Naive thymus-derived CD4-positive, alpha-beta T cell (primary cell): ENCODE measurements at regions of chr15 and their contacts with region 1.

Region 1: DNA sequence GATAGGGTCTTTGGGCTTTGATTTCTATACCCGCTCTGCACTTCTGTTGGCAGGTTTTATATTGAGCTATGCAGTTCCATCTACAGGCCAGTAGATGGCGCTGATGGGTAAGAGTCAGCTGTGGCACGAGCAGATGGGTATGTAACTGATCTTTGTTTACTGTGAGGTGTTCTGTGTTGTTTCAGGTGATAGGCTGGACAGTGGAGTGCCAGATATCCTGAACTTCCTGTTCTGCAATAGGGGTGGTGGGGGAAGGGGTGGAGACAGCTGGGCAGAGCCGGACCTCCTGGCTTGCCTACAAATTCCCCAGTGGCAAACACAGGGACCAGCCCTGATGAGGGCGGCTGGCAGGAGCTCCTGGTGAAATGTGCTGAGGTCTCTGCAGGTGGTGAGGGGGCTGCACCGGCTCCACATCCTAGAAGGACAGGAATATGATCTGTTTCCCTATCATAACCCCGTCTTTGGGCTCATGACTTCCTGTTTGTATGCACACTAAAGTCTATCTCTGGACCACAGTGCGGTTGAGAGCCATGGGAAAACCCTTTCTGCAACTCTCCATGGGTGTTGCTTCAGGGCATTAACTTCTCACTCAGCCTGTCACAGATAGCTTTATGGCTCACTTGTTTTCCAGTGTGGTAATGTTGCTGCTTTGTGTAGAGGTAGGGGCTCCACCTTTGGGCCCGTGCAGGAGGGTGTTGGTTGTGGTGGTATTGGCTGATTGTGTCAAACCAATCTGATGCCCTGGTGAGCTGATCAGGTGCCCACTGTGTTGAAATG is 13.4 kb upstream of the FAM98B start:
- DNase-seq: peak in 8 of 9 donors; percentile 33 to 72 (median 54)
- ATAC-seq: peak; percentile 99
- H3K4me3 ChIP-seq: no peak overlapping the region
- H3K4me3 Mint-ChIP-seq: peak overlapping the region in 1 of 10 donors; percentile 11
- H3K27ac ChIP-seq: no peak overlapping the region
- H3K27ac Mint-ChIP-seq: peak overlapping the region in 5 of 9 donors; percentile 5 to 21 (median 16)
- H3K4me1 ChIP-seq: no peaks in the 10 kb centered on the region
- H3K4me1 Mint-ChIP-seq: peaks cover 0 to 15% (median 6%) of the 10 kb centered on the region in 7 donors
- H3K27me3 ChIP-seq: no peaks in the 10 kb centered on the region
- H3K27me3 Mint-ChIP-seq: peaks cover 18 to 53% (median 33%) of the 10 kb centered on the region in 5 donors

Region 2: GRCh38 chr15:38453971-38454695 is 13.6 kb after region 1 on chr15 and contains the start of gene FAM98B:
- CTCF ChIA-PET with region 1: interaction called, 31 read pairs
- POLR2A ChIA-PET with region 1: interaction called, 4 read pairs
- intact Hi-C with region 1: no loop called
- DNase-seq: peak; percentile 73 to 94 (median 82)
- ATAC-seq: peak; percentile 92
- H3K4me3 ChIP-seq: peak within 1 kb of the TSS; percentile 98
- H3K4me3 Mint-ChIP-seq: peak within 1 kb of the TSS; percentile 86 to 99 (median 96)
- H3K27ac ChIP-seq: peak within 1 kb of the TSS; percentile 95
- H3K27ac Mint-ChIP-seq: peak within 1 kb of the TSS; percentile 92 to 99 (median 95)
- H3K4me1 ChIP-seq: peaks cover 13 to 22% of the 10 kb centered on the region in 2 donors
- H3K4me1 Mint-ChIP-seq: peaks cover 24 to 46% (median 36%) of the 10 kb centered on the region in 7 donors
- H3K27me3 ChIP-seq: no peaks in the 10 kb centered on the region
- H3K27me3 Mint-ChIP-seq: peaks cover 0 to 19% (median 0%) of the 10 kb centered on the region in 5 donors
- total RNA-seq, gene FAM98B: 16.2 to 39.5 (median 27.6) TPM

Region 3: DNA sequence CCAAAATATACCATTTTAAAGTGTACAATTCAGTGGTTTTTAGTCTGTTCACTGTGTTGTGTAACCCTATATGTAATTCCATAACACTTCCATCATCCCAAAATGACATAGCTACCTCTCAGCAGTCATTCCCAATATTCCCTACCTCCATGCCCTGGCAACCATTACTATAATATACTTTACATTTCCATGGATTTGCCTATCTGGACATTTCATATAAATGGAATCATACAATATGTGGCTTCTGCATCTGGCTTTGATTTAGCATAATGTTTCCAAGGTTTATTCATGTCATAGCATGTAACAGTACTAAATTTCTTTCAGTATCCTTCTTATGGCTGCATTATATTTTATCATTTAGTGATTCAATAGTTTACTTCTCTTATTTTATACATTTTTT is 38.7 kb after region 1 on chr15:
- CTCF ChIA-PET with region 1: interaction called, 9 read pairs
- POLR2A ChIA-PET with region 1: no interaction called
- intact Hi-C with region 1: loop called (anchors 1 to 5 kb)
- DNase-seq: no peak
- ATAC-seq: no peak
- H3K4me3 ChIP-seq: no peak overlapping the region
- H3K4me3 Mint-ChIP-seq: no peak overlapping the region
- H3K27ac ChIP-seq: no peak overlapping the region
- H3K27ac Mint-ChIP-seq: peak overlapping the region in 6 of 9 donors; percentile 17 to 87 (median 80)
- H3K4me1 ChIP-seq: peaks cover 14 to 19% of the 10 kb centered on the region in 2 donors
- H3K4me1 Mint-ChIP-seq: peaks cover 26 to 56% (median 41%) of the 10 kb centered on the region in 7 donors
- H3K27me3 ChIP-seq: no peaks in the 10 kb centered on the region
- H3K27me3 Mint-ChIP-seq: no peaks in the 10 kb centered on the region

Region 4: GRCh38 chr15:38699633-38700230 is 259.2 kb after region 1 on chr15:
- CTCF ChIA-PET with region 1: interaction called, 79 read pairs
- POLR2A ChIA-PET with region 1: interaction called, 6 read pairs
- intact Hi-C with region 1: loop called (anchors 1 kb)
- DNase-seq: peak in 8 of 9 donors; percentile 43 to 77 (median 71)
- ATAC-seq: peak; percentile 84
- H3K4me3 ChIP-seq: no peak overlapping the region
- H3K4me3 Mint-ChIP-seq: peak overlapping the region in 4 of 10 donors; percentile 8 to 73 (median 48)
- H3K27ac ChIP-seq: no peak overlapping the region
- H3K27ac Mint-ChIP-seq: peak overlapping the region; percentile 34 to 92 (median 77)
- H3K4me1 ChIP-seq: peaks cover 36 to 48% of the 10 kb centered on the region in 2 donors
- H3K4me1 Mint-ChIP-seq: peaks cover 23 to 71% (median 44%) of the 10 kb centered on the region in 7 donors
- H3K27me3 ChIP-seq: no peaks in the 10 kb centered on the region
- H3K27me3 Mint-ChIP-seq: no peaks in the 10 kb centered on the region

Region 5: DNA sequence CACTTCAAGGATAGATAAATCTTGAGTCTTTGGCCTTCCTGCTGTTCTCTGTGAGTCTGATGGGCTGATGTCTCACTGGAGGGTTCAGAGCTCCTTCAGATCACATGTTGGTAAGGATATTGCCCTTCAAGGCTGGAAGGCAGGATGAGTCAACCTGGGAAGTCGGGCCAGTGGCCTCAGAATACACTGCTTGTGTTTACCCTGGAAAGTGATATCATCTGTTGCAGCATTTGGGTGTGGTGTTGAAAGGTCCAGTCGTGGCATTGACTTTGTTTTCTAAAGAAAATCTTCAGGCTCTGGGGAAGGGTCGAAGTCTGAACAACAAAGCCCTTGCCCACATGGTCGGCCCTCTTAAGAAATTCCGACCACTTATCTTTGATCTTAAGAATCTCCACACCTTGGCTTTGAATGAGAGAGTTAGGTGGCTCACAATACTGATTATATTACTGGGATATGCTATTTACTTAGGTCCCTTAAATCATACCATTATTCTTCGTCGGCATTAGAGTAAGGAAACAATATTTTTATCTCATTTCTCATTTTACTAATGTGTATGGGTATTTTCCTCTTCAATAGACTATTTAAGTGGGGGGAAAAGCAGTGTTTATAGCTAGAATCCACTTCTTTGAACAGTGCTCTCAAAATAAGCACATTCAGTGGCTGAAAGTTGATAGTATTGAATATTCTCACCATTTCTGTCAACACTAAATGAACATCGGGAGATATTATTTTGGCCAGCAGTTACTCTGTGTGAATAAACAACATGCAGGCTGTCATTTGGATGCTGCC is 428.0 kb after region 1 on chr15:
- CTCF ChIA-PET with region 1: no interaction called
- POLR2A ChIA-PET with region 1: no interaction called
- intact Hi-C with region 1: loop called in 1 of 2 experiments (anchors 5 kb)
- DNase-seq: no peak
- ATAC-seq: no peak
- H3K4me3 ChIP-seq: no peak overlapping the region
- H3K4me3 Mint-ChIP-seq: no peak overlapping the region
- H3K27ac ChIP-seq: no peak overlapping the region
- H3K27ac Mint-ChIP-seq: no peak overlapping the region
- H3K4me1 ChIP-seq: no peaks in the 10 kb centered on the region
- H3K4me1 Mint-ChIP-seq: peaks cover 0 to 3% (median 0%) of the 10 kb centered on the region in 7 donors
- H3K27me3 ChIP-seq: peaks cover 0 to 5% of the 10 kb centered on the region in 2 donors
- H3K27me3 Mint-ChIP-seq: peaks cover 8 to 44% (median 33%) of the 10 kb centered on the region in 5 donors

Region 6: GRCh38 chr15:39756806-39757522 is 1316.4 kb after region 1 on chr15:
- CTCF ChIA-PET with region 1: interaction called, 20 read pairs
- POLR2A ChIA-PET with region 1: no interaction called
- intact Hi-C with region 1: loop called in 1 of 2 experiments (anchors 1 kb)
- DNase-seq: peak in 6 of 9 donors; percentile 29 to 50 (median 40)
- ATAC-seq: no peak
- H3K4me3 ChIP-seq: no peak overlapping the region
- H3K4me3 Mint-ChIP-seq: no peak overlapping the region
- H3K27ac ChIP-seq: no peak overlapping the region
- H3K27ac Mint-ChIP-seq: no peak overlapping the region
- H3K4me1 ChIP-seq: no peaks in the 10 kb centered on the region
- H3K4me1 Mint-ChIP-seq: no peaks in the 10 kb centered on the region
- H3K27me3 ChIP-seq: no peaks in the 10 kb centered on the region
- H3K27me3 Mint-ChIP-seq: peaks cover 0 to 58% (median 5%) of the 10 kb centered on the region in 5 donors